ENCODE measurements at regions of chr10 and their contacts with region 1.

Region 1: DNA sequence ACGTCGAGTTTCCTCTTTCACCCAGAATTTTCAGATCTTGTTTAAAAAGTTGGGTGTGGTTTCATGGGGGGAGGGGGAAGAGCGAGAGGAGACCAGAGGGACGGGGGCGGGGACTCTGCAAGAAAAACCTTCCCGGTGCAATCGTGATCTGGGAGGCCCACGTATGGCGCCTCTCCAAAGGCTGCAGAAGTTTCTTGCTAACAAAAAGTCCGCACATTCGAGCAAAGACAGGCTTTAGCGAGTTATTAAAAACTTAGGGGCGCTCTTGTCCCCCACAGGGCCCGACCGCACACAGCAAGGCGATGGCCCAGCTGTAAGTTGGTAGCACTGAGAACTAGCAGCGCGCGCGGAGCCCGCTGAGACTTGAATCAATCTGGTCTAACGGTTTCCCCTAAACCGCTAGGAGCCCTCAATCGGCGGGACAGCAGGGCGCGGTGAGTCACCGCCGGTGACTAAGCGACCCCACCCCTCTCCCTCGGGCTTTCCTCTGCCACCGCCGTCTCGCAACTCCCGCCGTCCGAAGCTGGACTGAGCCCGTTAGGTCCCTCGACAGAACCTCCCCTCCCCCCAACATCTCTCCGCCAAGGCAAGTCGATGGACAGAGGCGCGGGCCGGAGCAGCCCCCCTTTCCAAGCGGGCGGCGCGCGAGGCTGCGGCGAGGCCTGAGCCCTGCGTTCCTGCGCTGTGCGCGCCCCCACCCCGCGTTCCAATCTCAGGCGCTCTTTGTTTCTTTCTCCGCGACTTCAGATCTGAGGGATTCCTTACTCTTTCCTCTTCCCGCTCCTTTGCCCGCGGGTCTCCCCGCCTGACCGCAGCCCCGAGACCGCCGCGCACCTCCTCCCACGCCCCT is at the start of gene VIM:
- DNase-seq: peak; percentile 95 to 96 (median 95)
- ATAC-seq: peak; percentile 81 to 86
- H3K4me3 ChIP-seq: peak within 1 kb of the TSS; percentile 84
- H3K27ac ChIP-seq: peak within 1 kb of the TSS; percentile 92
- H3K4me1 ChIP-seq: peaks cover 4% of the 10 kb centered on the region
- H3K27me3 ChIP-seq: no peaks in the 10 kb centered on the region
- total RNA-seq, gene VIM: 772 to 952 (median 847) TPM

Region 2: DNA sequence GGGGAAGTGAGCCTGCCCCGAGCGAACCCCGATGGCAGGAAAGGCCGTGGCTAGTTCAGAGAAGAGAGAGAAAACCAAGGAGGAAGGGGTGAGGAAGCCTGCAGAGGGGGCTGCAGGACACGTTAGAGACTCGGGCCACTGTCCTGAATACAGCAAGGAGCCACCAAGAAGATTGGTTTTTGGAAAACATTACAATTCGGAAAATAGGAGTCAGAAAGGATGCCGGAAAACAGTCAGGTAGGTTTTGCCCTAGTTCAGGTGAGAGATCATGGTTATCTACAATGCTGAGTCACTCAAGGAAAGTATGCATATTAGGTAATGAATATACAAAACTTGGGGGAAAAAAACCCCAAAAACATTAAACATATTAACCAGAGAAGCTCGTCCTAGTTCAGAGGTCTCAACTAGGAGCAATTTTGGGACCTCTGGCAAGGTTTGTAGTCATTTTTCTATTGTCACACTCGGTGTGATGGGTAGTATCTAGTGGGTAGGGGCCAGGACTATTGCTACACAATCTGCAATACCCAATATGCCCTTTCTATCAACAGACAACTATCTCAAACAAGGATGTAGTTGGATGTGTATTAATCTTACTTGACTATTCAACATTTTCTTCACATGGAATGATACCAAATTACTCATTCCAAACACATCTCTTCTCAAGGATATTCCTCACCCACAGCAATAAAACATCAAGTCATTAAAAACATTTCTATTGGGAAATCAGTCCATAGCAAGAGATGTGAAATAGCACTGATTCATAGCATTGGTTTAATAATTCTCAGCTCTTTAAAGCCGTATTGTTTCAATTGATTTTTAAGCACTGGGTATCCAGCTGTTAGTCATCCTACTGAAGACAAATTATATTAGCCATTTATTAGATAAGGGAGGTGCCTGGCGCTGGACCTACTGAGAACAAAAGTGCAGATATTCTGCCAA is 336.7 kb before region 1 on chr10:
- intact Hi-C with region 1: loop called in 1 of 4 experiments (anchors 5 kb)
- DNase-seq: peak; percentile 70 to 91 (median 84)
- ATAC-seq: peak; percentile 94 to 97
- H3K4me3 ChIP-seq: no peak overlapping the region
- H3K27ac ChIP-seq: no peak overlapping the region
- H3K4me1 ChIP-seq: no peaks in the 10 kb centered on the region
- H3K27me3 ChIP-seq: no peaks in the 10 kb centered on the region

Region 3: DNA sequence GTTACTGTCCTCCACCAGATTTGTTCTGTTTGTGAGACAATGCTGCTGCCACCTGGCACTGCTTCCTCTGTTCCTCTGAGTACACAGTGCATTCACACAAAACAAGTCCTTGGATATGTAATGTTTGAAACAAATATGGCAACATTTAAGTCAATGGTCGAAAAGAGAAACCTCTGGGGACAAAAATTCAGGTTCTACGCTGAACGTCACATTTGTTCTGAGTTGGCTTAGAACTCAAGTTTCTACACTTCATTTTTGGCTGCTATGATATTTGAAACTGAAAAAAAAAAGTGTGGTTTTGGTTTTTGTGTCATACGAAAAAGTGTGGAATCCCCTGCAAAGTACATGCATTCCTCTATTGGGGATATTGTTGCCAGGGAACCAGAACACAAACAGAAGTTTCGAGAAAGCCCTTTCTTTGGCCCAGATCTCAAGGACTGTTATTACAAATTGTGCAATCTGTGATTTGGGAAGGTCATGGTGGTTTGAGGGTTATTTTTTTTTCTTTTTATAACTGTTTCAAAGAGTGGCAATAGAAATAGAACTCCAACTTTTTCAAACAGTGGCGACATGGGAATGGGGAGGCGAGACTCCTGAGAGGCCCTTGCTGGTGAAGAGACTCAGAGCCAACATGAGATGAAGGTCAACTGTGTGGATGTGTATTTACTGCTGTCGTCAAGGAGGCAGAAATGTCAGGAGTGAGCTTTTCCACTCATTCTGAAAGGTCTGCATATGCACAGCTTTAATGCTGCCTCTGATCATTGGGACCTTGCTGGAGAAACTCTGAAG is 226.2 kb before region 1 on chr10:
- intact Hi-C with region 1: loop called in 1 of 4 experiments (anchors 10 kb)
- DNase-seq: peak; percentile 62 to 89 (median 69)
- ATAC-seq: peak; percentile 86 to 89
- H3K4me3 ChIP-seq: no peak overlapping the region
- H3K27ac ChIP-seq: peak overlapping the region; percentile 84
- H3K4me1 ChIP-seq: no peaks in the 10 kb centered on the region
- H3K27me3 ChIP-seq: no peaks in the 10 kb centered on the region